Psoas muscle (tissue), 8 donors: ENCODE measurements at regions of chr5 and their contacts with region 1.

Region 1: DNA sequence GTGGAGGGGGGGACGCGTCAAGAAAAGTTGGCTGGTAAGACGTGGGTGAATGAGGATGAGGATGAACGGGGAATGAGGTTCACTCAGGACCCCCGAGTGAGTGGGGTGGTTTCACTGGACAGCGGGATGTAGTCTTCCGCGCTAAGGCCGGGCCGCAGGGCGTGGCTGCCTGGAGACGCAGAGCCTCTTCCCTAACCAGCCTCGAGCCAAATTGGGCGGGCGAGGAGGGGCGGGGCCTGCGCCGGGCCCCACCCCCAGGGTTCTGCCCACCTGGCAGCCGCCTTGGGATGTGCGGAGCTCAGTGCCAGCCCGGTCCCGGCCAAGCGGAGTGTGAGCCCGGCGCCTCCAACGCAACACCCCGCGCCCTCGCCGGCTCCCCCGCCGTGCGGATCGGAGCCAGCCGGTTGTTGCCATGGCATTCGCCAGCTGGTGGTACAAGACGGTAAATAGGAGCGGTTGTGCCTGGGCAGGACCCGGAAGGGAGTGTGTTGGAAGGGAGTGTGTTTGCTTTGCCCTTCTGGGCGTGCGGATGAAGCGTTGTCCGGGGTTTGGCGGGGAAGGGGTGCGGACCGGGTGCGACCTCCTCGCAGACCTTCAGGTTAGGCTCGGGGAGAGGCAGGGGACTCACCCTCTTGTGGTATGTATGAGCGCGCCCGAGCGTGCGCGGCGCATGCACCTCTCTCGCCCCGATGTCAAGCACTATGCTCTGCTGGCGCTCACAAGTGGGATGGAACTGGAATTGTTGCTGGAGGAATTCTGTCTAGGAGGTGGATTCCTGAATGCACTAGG is 743 bp downstream of the CAST start:
- DNase-seq: peak; percentile 92 to 96
- ATAC-seq: peak; percentile 93 to 96 (median 94)
- H3K4me3 ChIP-seq: peak overlapping the region; percentile 96
- H3K27ac ChIP-seq: peak overlapping the region; percentile 98
- H3K4me1 ChIP-seq: peaks cover 12% of the 10 kb centered on the region
- H3K27me3 ChIP-seq: no peaks in the 10 kb centered on the region
- CTCF ChIP-seq: no peak

Region 2: DNA sequence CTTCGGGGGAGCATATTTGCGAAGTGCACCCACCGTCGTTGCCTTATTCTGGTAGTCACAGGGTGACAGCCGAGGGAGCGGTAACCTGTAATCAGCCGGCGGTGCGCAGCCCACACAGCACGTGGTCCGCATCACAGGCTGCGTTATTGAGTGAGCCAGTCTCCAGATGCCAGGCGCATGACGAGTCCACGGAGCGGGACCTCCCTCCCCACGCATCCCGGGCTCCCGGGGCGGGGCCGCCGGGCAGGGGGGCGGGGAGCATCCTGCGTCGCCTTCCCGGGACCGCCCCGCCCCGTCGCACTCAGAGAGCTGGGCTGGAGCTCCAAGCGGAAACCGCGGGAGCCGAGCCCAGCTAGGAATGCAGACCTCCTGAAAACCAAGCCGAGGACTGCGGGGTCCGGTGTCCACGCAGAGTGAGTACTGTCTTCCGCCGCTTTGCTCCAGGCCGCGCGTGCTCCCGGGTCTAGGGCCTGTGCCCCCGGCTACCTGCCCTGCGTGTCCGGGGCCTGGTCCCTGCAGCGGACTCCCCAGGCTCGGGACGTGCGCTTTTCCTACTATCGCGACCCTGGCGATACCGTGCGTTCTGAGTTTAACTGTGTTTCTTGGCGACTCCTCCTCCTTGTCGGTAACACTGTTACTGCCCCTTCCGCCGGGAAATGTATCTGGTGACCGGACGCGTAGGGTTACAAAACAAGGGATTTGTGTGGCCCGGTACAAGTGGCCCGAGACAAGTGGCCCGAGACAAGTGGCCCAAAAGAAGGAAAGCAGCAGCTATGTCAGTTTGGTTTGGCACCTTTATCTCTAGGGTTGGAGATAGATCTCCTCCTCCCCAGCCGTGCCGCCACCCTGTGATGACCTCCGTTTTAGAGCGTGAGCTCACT is 39.8 kb after region 1 on chr5:
- intact Hi-C with region 1: loop called (anchors 2 to 5 kb)
- DNase-seq: peak; percentile 98
- ATAC-seq: peak; percentile 85 to 94 (median 88)
- H3K4me3 ChIP-seq: peak overlapping the region; percentile 85
- H3K27ac ChIP-seq: peak overlapping the region; percentile 99
- H3K4me1 ChIP-seq: peaks cover 69% of the 10 kb centered on the region
- H3K27me3 ChIP-seq: no peaks in the 10 kb centered on the region
- CTCF ChIP-seq: no peak